Ovary (tissue), 10 donors: ENCODE measurements at regions of chr15 and their contacts with region 1.

Region 1: GRCh38 chr15:42786978-42787377 is 50.0 kb upstream of the CDAN1 start:
- DNase-seq: no peak
- H3K4me3 ChIP-seq: no peak overlapping the region
- H3K27ac ChIP-seq: no peak overlapping the region
- H3K4me1 ChIP-seq: no peaks in the 10 kb centered on the region
- H3K27me3 ChIP-seq: no peaks in the 10 kb centered on the region
- CTCF ChIP-seq: no peak
- EP300 ChIP-seq: no peak
- POLR2A ChIP-seq: no peak

Region 2: DNA sequence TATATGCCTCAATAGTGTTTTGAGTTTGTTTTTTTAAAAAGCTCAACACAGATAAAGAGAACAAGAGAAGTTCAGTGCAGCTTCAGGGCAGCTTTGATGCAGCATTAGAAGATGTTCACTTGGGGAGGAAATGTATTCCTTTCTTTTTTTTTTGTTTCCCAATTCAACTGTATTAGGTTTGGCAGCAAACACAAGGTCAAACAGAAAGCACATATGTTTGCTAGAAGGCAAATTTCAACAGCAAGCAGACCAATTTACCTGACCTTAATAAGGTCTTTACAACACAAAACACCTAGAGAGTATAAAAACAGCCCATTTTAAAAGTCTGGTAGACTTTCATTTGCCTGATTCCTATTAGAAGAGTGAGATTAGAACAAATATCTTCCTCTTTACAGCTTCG is 42.8 kb before region 1 on chr15:
- intact Hi-C with region 1: loop called in 1 of 4 experiments (anchors 2 kb)
- DNase-seq: no peak
- H3K4me3 ChIP-seq: no peak overlapping the region
- H3K27ac ChIP-seq: no peak overlapping the region
- H3K4me1 ChIP-seq: no peaks in the 10 kb centered on the region
- H3K27me3 ChIP-seq: no peaks in the 10 kb centered on the region
- CTCF ChIP-seq: no peak
- EP300 ChIP-seq: no peak
- POLR2A ChIP-seq: no peak